Activated CD4-positive, alpha-beta T cell treated with anti-CD3 and anti-CD28 coated beads, Interleukin-2, amount 10 ng/mL, durations not matched to agents 24 days and 14 days (primary cell): ENCODE measurements at regions of chr2 and their contacts with region 1.

Region 1: GRCh38 chr2:204325468-204325867 is 219.8 kb upstream of the PARD3B start:
- DNase-seq: peak; percentile 90
- H3K4me3 Mint-ChIP-seq: no peak overlapping the region
- H3K27ac Mint-ChIP-seq: no peak overlapping the region
- H3K4me1 Mint-ChIP-seq: peaks cover 5% of the 10 kb centered on the region
- H3K27me3 Mint-ChIP-seq: peaks cover 6% of the 10 kb centered on the region

Region 2: GRCh38 chr2:204145263-204145751 is 180.2 kb before region 1 on chr2:
- intact Hi-C with region 1: loop called (anchors 10 kb)
- DNase-seq: peak; percentile 94
- H3K4me3 Mint-ChIP-seq: peak overlapping the region; percentile 86
- H3K27ac Mint-ChIP-seq: peak overlapping the region; percentile 26
- H3K4me1 Mint-ChIP-seq: peaks cover 15% of the 10 kb centered on the region
- H3K27me3 Mint-ChIP-seq: peaks cover 35% of the 10 kb centered on the region

Region 3: GRCh38 chr2:204340511-204340910 is 15.0 kb after region 1 on chr2:
- intact Hi-C with region 1: no loop called
- DNase-seq: no peak
- H3K4me3 Mint-ChIP-seq: no peak overlapping the region
- H3K27ac Mint-ChIP-seq: no peak overlapping the region
- H3K4me1 Mint-ChIP-seq: no peaks in the 10 kb centered on the region
- H3K27me3 Mint-ChIP-seq: peaks cover 44% of the 10 kb centered on the region

Region 4: GRCh38 chr2:204691911-204692510 is 366.5 kb after region 1 on chr2:
- intact Hi-C with region 1: loop called (anchors 1 kb)
- DNase-seq: peak; percentile 74
- H3K4me3 Mint-ChIP-seq: no peak overlapping the region
- H3K27ac Mint-ChIP-seq: no peak overlapping the region
- H3K4me1 Mint-ChIP-seq: peaks cover 3% of the 10 kb centered on the region
- H3K27me3 Mint-ChIP-seq: peaks cover 8% of the 10 kb centered on the region

Region 5: GRCh38 chr2:205808486-205809121 is 1483.1 kb after region 1 on chr2:
- intact Hi-C with region 1: loop called (anchors 2 kb)
- DNase-seq: no peak
- H3K4me3 Mint-ChIP-seq: no peak overlapping the region
- H3K27ac Mint-ChIP-seq: no peak overlapping the region
- H3K4me1 Mint-ChIP-seq: no peaks in the 10 kb centered on the region
- H3K27me3 Mint-ChIP-seq: peaks cover 19% of the 10 kb centered on the region

Region 6: GRCh38 chr2:205885492-205886099 is 1560.1 kb after region 1 on chr2:
- intact Hi-C with region 1: loop called (anchors 2 kb)
- DNase-seq: peak; percentile 90
- H3K4me3 Mint-ChIP-seq: no peak overlapping the region
- H3K27ac Mint-ChIP-seq: no peak overlapping the region
- H3K4me1 Mint-ChIP-seq: peaks cover 2% of the 10 kb centered on the region
- H3K27me3 Mint-ChIP-seq: peaks cover 9% of the 10 kb centered on the region

Region 7: GRCh38 chr2:205925373-205926337 is 1600.2 kb after region 1 on chr2:
- intact Hi-C with region 1: loop called (anchors 5 kb)
- DNase-seq: peak; percentile 90
- H3K4me3 Mint-ChIP-seq: peak overlapping the region; percentile 47
- H3K27ac Mint-ChIP-seq: no peak overlapping the region
- H3K4me1 Mint-ChIP-seq: peaks cover 9% of the 10 kb centered on the region
- H3K27me3 Mint-ChIP-seq: peaks cover 38% of the 10 kb centered on the region

Region 8: DNA sequence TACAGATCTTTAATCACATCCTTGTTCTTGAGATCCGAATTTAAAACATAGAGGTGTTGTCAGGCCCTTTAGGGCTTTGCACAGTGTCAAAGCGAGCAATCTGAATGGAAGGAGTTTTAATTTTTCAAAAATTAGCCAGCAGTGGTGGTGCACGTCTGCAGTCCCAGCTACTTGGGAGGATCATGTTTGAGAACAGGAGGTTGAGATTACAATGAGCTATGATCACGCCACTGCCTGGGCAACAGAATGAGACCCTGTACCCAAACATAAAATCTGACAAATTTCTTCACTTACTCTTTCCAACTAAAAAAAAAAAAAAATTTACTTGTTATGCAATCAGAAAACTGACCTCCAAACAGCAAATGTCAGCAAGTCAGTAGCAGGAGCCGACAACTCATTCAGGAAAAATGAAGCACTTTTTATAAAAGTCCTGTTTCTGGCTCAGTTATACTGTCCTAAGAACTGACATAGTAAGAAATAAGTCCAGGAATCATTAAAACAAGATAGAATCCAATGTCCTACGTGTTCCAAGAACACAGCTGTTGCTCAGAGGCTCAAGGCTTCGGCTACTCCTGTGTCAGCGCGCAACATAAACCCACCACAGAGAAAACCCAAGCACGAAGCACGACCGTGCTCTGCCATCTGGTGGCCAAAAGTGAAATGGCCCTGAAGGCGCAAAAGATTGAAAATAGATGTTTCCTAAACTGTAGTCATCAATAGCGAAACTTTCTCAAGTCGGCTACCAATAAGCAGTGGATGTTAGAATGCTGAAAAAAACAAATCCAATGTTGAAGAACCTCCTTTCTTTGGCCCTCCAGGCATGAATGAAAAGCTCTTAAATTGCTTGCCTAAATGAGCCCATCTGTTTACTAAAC is 1622.4 kb after region 1 on chr2:
- intact Hi-C with region 1: loop called (anchors 1 kb)
- DNase-seq: peak; percentile 86
- H3K4me3 Mint-ChIP-seq: no peak overlapping the region
- H3K27ac Mint-ChIP-seq: no peak overlapping the region
- H3K4me1 Mint-ChIP-seq: peaks cover 4% of the 10 kb centered on the region
- H3K27me3 Mint-ChIP-seq: peaks cover 8% of the 10 kb centered on the region